AG04450 (cell line): ENCODE measurements at regions of chr10 and their contacts with region 1.

Region 1: DNA sequence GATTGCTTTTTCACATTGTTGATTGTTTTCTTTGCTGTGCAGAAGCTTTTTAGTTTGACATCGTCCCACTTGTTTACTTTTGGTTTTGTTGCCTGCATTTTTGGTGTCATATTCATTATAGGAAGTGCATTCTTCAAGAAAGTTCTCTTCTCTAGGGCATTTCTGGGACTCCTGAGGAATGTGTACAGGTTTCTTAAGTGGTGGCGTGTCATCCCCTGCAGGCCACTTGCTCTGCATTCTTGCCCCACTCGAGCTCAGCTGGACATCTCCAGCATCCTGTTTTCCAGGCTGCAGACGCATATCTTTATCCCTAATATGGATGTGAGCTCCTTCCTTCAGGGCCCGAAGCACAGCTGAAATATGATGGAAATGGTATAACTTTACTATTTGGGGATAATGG is 255.6 kb upstream of the HABP2 start:
- DNase-seq: no peak
- H3K4me3 ChIP-seq: no peak overlapping the region
- H3K27ac ChIP-seq: no peak overlapping the region
- H3K27me3 ChIP-seq: peaks cover 2% of the 10 kb centered on the region
- CTCF ChIP-seq: no peak

Region 2: DNA sequence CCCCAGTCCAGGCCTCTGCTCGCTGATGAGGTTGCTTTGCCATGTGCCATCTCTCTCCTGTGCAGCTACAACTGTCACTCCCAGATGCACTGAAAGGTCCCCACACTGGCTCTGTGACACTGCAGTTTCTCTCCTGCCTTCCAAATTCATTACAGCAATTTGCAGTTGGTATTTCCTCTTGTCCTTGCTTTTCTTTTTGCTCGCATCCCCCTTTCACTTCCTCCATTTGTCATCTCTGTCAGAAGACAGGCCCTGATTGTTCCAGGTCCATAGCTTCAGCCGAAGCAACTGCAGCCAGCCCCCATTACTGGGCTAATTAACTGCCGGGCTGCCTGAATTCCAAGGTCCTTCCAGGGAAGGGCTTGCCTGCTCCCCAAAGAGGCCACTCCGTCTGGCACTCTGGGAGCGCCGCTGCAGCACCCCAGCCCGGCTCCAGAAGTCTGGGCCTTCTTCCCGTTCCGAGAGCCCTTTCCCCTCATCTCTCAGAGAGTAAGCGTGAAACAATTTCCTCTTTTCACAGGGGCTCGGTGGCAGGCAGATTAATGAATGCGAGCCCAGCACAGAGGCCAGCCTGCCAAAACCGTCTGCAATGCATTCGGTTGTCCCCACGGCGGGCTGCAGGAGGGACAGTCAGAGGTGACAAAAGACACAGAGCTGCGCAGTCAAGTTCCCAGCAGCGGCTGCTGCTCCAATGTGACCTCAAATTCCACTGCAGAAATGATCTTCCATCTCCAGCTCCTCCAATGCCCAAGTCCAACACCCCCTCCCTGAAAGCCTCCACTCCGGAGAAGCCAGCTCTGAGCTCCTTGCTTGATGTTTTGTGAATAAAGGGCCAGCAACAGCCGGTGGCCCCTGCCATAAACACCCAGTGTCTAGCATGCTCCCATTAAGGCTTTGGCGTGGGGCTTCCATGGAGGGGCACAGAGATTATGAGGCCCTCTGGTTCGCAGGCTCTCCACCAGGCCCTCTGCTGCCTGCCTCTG is 23.8 kb before region 1 on chr10:
- CTCF ChIA-PET with region 1: no interaction called
- POLR2A ChIA-PET with region 1: interaction called, 10 read pairs
- DNase-seq: no peak
- H3K4me3 ChIP-seq: no peak overlapping the region
- H3K27ac ChIP-seq: no peak overlapping the region
- H3K27me3 ChIP-seq: peaks cover 10% of the 10 kb centered on the region
- CTCF ChIP-seq: no peak